Right ventricle myocardium inferior (tissue), 1 donor: ENCODE measurements at regions of chr5 and their contacts with region 1.

Region 1: GRCh38 chr5:94968507-94969095 is 316.3 kb downstream of the MCTP1 start:
- DNase-seq: no peak
- ATAC-seq: no peak

Region 2: GRCh38 chr5:94807985-94808384 is 160.6 kb before region 1 on chr5:
- intact Hi-C with region 1: no loop called
- DNase-seq: no peak
- ATAC-seq: no peak

Region 3: DNA sequence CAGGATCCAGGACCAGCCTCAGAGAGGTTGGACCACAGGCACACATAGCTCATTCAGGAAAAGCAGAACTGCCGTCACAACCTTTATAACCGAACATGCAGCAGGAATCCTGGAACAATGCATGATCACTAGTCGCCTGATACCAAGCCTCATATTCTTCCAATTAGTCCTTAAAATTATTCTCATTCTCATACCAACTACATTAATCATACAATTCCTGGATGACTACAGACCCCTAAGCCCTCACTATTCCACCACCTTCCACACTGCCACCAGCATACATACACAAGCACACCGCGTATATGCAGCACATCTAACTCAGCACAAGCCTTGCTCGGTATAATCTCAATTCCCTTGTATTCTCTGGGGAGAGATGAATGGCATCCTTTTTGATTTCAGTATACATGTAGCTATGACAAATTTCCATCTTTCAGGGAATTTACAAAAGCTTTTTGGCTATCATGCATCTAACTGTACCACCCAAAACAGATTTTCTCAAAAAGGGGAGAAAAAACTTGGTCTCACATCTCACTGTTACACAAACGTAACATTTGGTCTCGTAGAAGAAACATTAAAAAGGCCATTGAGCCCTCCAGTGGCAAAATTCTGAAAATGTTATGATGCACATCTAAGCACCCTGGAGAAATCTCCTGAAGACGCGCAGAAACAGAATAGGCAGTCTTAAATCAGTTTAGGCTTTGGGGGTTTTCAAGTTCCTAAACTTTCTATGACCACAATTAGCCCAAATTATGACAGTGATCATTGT is 270.1 kb after region 1 on chr5:
- intact Hi-C with region 1: loop called (anchors 5 kb)
- DNase-seq: no peak
- ATAC-seq: no peak

Region 4: GRCh38 chr5:95261437-95262175 is 293.0 kb after region 1 on chr5:
- intact Hi-C with region 1: loop called (anchors 10 kb)
- DNase-seq: peak; percentile 64
- ATAC-seq: peak; percentile 69